Left colon (tissue), 2 donors: ENCODE measurements at regions of chr6 and their contacts with region 1.

Region 1: DNA sequence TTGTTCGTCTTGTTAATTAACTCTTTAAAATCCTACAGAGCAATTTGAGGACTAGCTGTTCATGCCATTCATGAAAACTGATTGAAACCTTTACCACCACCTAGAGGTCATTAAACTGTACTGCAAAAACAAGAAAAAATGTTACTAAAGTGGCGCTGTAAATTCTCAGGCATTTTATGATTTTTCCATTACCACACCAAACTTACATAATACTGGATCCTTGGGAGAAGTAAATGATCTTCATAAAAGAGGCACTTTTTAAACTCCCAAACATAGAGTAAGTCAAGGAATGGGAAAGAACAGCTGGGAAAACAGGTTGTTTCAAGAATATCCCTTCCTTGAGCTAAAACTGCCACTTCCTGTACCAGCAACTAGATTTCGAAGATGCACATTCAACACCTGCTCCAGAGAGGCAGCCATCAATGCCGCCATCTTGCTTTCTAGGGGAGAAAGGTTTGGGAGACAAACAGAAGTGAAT is 54.3 kb downstream of the MYLIP start:
- DNase-seq: no peak
- ATAC-seq: peak; percentile 53

Region 2: GRCh38 chr6:15691250-15691869 is 491.9 kb before region 1 on chr6:
- intact Hi-C with region 1: loop called in 1 of 2 experiments (anchors 5 kb)
- DNase-seq: peak; percentile 80 to 84
- ATAC-seq: peak; percentile 93

Region 3: GRCh38 chr6:16128759-16129622 is 54.2 kb before region 1 on chr6 and contains the start of gene MYLIP:
- intact Hi-C with region 1: loop called in 1 of 2 experiments (anchors 10 kb)
- DNase-seq: peak; percentile 97 to 99
- ATAC-seq: peak; percentile 86
- total RNA-seq, gene MYLIP: 17.2 to 38.6 TPM

Region 4: GRCh38 chr6:16236631-16237199 is 53.5 kb after region 1 on chr6:
- intact Hi-C with region 1: no loop called
- DNase-seq: peak; percentile 63 to 72
- ATAC-seq: peak; percentile 32

Region 5: GRCh38 chr6:16319813-16320532 is 136.7 kb after region 1 on chr6:
- intact Hi-C with region 1: no loop called
- DNase-seq: peak in 1 of 2 donors; percentile 37
- ATAC-seq: peak; percentile 34